Endothelial cell of umbilical vein (primary cell): ENCODE measurements at regions of chr16 and their contacts with region 1.

Region 1: GRCh38 chr16:75647492-75648264 is at the starts of genes KARS1 and TERF2IP:
- DNase-seq: peak; percentile 97
- H3K4me3 ChIP-seq: peak within 1 kb of the TSS; percentile 95 to 98 (median 98)
- H3K27ac ChIP-seq: peak within 1 kb of the TSS; percentile 67
- H3K4me1 ChIP-seq: peaks cover 32% of the 10 kb centered on the region
- H3K27me3 ChIP-seq: no peaks in the 10 kb centered on the region
- CTCF ChIP-seq: no peak
- POLR2A ChIP-seq: peak; percentile 92
- total RNA-seq, gene KARS1: 137 and 146 TPM in 2 replicates
- total RNA-seq, gene TERF2IP: 40.7 and 41.5 TPM in 2 replicates

Region 2: GRCh38 chr16:75566040-75566810 is 81.5 kb before region 1 on chr16 and contains the start of gene GABARAPL2:
- CTCF ChIA-PET with region 1: no interaction called
- POLR2A ChIA-PET with region 1: no interaction called
- dilution Hi-C with region 1: no loop called
- intact Hi-C with region 1: loop called (anchors 2 kb)
- DNase-seq: peak; percentile 84
- H3K4me3 ChIP-seq: peak within 1 kb of the TSS; percentile 48 to 83 (median 79)
- H3K27ac ChIP-seq: no peak within 1 kb of the TSS
- H3K4me1 ChIP-seq: peaks cover 9% of the 10 kb centered on the region
- H3K27me3 ChIP-seq: peaks cover 7 to 24% of the 10 kb centered on the region in 2 experiments
- CTCF ChIP-seq: no peak
- POLR2A ChIP-seq: peak; percentile 66
- total RNA-seq, gene GABARAPL2: 77.9 and 82.5 TPM in 2 replicates

Region 3: GRCh38 chr16:75764154-75764768 is 116.6 kb after region 1 on chr16:
- CTCF ChIA-PET with region 1: interaction called, 14 read pairs
- POLR2A ChIA-PET with region 1: interaction called, 3 read pairs
- dilution Hi-C with region 1: no loop called
- intact Hi-C with region 1: loop called (anchors 1 kb)
- DNase-seq: peak; percentile 64
- H3K4me3 ChIP-seq: no peak overlapping the region
- H3K27ac ChIP-seq: no peak overlapping the region
- H3K4me1 ChIP-seq: no peaks in the 10 kb centered on the region
- H3K27me3 ChIP-seq: peaks cover 0 to 4% of the 10 kb centered on the region in 2 experiments
- CTCF ChIP-seq: peak; percentile 60 to 68
- POLR2A ChIP-seq: no peak

Region 4: GRCh38 chr16:75820672-75821071 is 173.0 kb after region 1 on chr16:
- CTCF ChIA-PET with region 1: no interaction called
- POLR2A ChIA-PET with region 1: no interaction called
- dilution Hi-C with region 1: no loop called
- intact Hi-C with region 1: no loop called
- DNase-seq: no peak
- H3K4me3 ChIP-seq: no peak overlapping the region
- H3K27ac ChIP-seq: no peak overlapping the region
- H3K4me1 ChIP-seq: no peaks in the 10 kb centered on the region
- H3K27me3 ChIP-seq: no peaks in the 10 kb centered on the region
- CTCF ChIP-seq: no peak
- POLR2A ChIP-seq: no peak

Region 5: DNA sequence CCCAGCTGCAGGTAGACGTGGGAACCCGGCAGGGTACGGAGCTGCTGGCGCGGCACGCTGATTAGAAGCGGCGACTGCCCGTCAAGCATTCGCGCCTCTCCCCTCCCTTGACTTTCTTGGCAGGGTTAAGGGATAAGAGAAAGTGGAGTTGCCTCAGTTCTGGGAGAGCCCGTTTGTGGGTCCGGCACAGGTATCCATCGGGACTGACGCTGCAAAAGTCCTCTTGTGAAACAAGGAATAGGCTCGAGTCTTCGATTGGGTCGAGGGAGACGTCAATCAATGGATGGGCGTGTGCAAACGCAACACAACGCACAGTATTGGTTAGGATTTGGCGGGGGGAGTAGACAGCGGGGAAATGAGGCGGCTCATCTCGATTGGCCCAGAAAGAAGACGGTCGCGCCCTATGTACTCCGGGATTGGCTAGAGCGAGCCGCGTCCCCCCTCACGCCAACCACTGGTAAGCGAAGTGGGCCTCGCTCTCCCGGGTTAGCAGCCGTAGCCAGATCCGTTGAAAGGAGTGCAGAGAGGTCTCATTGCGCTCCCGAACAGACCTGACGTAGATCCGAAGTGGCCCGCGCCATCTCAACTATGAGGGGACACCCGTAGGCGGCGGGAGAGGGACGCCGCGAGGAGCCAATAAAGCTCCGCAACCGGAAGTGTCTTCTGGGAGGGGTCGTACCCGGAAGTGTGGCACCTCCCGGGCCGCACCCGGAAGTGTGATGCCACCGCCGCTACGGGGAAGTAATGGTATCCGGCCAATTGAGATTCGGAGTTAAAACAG is 1543.0 kb after region 1 on chr16 and contains the start of gene MON1B:
- CTCF ChIA-PET with region 1: no interaction called
- POLR2A ChIA-PET with region 1: no interaction called
- dilution Hi-C with region 1: no loop called
- intact Hi-C with region 1: loop called (anchors 1 kb)
- DNase-seq: peak; percentile 99
- H3K4me3 ChIP-seq: peak within 1 kb of the TSS; percentile 66 to 91 (median 70)
- H3K27ac ChIP-seq: peak within 1 kb of the TSS; percentile 82
- H3K4me1 ChIP-seq: peaks cover 12% of the 10 kb centered on the region
- H3K27me3 ChIP-seq: peaks cover 2% of the 10 kb centered on the region in 2 experiments
- CTCF ChIP-seq: no peak
- POLR2A ChIP-seq: peak; percentile 74
- total RNA-seq, gene MON1B: 50.1 and 57.0 TPM in 2 replicates